ENCODE measurements at regions of chr14 and their contacts with region 1.

Region 1: DNA sequence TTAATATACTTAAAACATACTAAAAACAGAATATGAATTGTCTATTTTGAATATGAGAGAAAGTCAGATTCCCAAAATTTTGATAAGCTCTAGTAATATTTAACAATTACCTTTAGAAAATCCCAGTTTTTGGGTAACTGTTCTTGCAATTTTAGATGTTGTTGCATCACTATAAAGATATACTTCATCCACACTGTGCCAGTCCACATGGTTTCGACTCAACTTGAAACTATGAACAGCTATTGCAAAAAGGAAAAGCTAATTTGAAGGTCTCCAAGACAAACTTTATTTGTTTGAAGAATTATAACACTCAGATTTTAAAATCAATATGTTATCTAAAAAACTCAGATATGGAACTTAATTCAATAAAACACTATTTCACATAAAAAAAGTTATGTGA is 59.9 kb downstream of the DDHD1 start:
- DNase-seq: no peak

Region 2: DNA sequence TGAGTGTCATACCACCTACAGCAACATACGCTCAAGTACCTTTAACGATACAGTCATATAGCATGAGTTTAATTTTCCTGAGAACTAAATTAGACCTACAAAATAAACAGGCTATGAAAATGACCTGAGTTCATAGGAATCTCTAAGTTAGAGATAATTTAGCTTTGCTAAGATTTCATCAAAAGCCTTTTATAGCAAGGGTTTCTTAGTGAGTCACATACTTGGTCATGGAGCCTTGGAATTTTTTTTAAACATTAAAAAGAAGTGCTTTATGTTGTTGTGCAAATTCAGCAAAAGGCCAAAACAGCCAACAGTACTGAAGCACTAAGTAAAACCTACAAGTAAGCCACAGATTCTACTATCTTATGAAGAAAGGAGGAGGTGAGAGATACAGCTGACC is 48.7 kb before region 1 on chr14:
- intact Hi-C with region 1: loop called in 1 of 2 experiments (anchors 2 kb)
- DNase-seq: no peak

Region 3: DNA sequence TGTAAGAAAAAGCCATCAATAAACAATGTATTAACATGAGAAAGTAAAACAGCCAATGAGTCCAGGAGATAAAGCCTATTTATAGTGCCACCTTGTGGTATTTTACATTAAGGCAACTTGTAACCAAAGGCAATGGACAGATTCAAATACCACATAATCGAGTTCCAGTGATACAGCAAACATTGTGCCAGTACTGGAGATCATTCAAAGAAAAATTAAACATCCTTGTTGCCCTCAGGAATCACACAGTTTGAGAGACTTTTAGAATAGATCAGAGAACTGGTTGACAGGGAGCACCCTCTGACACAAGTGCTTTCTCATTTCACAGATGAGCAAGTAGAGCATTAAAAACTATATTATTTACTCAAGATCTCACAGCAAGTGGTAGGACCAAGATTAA is 38.2 kb before region 1 on chr14:
- intact Hi-C with region 1: no loop called
- DNase-seq: no peak